OCI-LY7 (cell line): ENCODE measurements at regions of chr5 and their contacts with region 1.

Region 1: GRCh38 chr5:122192497-122193496 is 63.5 kb downstream of the ZNF474 start:
- DNase-seq: peak; percentile 46
- H3K4me3 ChIP-seq: no peak overlapping the region
- H3K27ac ChIP-seq: no peak overlapping the region
- H3K4me1 ChIP-seq: no peaks in the 10 kb centered on the region
- CTCF ChIP-seq: peak; percentile 78

Region 2: DNA sequence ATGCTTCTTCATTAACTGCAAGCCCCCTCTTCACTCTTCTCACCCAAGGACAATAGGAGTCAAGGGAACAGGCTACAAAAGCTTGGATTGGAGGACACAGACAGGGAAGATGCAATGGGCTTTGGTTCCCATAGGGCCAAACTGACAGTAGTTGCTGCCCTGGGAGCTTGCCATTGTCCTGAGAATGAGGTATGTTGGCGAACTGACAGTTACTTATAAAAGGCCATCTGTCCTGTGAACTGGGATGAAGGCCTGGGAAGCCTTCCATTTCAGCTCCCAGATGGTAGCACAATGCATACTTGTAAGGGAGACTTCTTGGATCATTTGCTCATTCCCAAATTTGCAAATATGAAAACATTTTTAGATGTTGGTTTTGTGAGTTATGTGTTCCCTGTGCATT is 208.1 kb after region 1 on chr5:
- CTCF ChIA-PET with region 1: no interaction called
- POLR2A ChIA-PET with region 1: no interaction called
- intact Hi-C with region 1: loop called (anchors 5 kb)
- DNase-seq: no peak
- H3K4me3 ChIP-seq: no peak overlapping the region
- H3K27ac ChIP-seq: no peak overlapping the region
- H3K4me1 ChIP-seq: no peaks in the 10 kb centered on the region
- CTCF ChIP-seq: no peak

Region 3: DNA sequence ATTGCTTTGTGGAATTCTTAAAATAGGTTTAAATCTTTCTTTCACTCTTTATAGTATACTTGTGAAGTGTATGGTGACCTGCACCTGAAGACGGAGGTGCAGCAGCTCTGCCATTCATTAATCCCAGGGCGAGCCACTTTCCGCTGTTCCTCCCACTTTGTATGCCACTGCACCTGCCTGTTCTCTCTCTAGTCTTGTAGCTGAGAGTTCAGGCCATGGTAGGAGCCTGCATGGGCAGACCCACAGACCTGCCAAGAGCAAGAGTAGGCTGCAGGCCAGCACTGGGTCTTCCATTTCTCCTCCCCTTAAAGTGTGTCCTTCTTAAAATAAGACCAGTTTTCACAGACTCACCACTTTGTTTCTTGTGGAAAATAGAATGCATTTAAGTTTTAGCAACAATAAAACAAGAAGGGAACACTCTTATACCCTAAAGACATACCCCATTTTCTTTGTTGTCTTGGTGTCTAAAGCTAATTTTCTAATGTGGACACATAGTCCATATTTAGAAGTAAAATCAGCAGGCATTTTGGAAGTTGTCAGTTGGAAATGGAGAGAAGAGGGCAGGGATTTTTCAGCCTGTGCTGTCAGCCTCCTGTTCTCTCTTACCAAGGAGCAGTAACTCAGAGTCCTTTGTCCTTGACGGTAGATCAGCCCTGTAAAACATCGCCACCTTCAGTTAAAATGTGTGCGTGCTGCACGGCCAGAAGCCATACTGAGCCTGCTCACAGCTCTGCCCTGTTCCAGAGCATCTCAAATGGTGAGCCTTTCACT is 222.4 kb after region 1 on chr5:
- CTCF ChIA-PET with region 1: no interaction called
- POLR2A ChIA-PET with region 1: no interaction called
- intact Hi-C with region 1: loop called (anchors 1 kb)
- DNase-seq: peak; percentile 29
- H3K4me3 ChIP-seq: no peak overlapping the region
- H3K27ac ChIP-seq: no peak overlapping the region
- H3K4me1 ChIP-seq: no peaks in the 10 kb centered on the region
- CTCF ChIP-seq: peak; percentile 68

Region 4: GRCh38 chr5:123605822-123606221 is 1413.0 kb after region 1 on chr5:
- CTCF ChIA-PET with region 1: no interaction called
- POLR2A ChIA-PET with region 1: no interaction called
- intact Hi-C with region 1: loop called (anchors 10 kb)
- DNase-seq: no peak
- H3K4me3 ChIP-seq: no peak overlapping the region
- H3K27ac ChIP-seq: no peak overlapping the region
- H3K4me1 ChIP-seq: no peaks in the 10 kb centered on the region
- CTCF ChIP-seq: no peak

Region 5: GRCh38 chr5:124185716-124186115 is 1992.9 kb after region 1 on chr5:
- CTCF ChIA-PET with region 1: no interaction called
- POLR2A ChIA-PET with region 1: no interaction called
- intact Hi-C with region 1: no loop called
- DNase-seq: no peak
- H3K4me3 ChIP-seq: no peak overlapping the region
- H3K27ac ChIP-seq: no peak overlapping the region
- H3K4me1 ChIP-seq: no peaks in the 10 kb centered on the region
- CTCF ChIP-seq: no peak